Naive thymus-derived CD4-positive, alpha-beta T cell (primary cell): ENCODE measurements at regions of chr22 and their contacts with region 1.

Region 1: DNA sequence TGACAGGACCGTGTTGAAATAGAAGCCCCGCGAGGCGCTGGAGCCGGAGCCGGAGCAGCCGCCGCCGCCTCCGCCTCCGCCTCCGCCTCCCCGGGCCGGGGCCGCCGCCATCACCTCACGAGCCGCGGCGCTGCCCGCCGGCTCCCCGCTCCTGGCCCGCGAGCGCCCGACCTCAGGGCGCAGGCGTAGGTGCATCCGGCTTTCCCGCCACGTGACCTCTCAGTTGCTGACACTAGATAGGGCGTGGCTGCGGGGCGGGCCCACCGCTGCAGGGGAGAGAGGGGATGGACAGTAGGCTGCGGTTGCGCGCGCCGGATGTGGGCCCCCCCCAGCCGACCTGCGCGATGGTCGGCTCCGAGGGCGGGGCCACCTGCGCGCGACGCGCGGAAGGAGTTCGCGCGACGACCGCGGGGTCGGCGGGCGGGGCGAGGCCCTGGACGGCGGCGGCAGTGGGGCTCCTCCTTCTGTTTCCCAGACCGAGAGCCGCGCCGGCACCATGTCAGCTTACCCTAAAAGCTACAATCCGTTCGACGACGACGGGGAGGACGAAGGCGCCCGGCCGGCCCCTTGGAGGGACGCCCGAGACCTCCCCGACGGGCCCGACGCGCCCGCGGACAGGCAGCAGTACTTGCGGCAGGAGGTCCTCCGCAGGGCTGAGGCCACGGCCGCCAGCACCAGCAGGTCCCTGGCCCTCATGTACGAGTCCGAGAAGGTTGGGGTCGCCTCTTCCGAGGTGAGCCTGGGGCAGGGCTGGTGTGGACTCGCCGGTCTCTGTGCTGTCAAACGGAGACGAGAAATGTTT is at the starts of genes PI4KA and SNAP29:
- DNase-seq: peak; percentile 92 to 98 (median 96)
- ATAC-seq: peak; percentile 97
- H3K4me3 ChIP-seq: peak within 1 kb of the TSS; percentile 78
- H3K4me3 Mint-ChIP-seq: peak within 1 kb of the TSS; percentile 87 to 95 (median 92)
- H3K27ac ChIP-seq: peak within 1 kb of the TSS; percentile 87
- H3K27ac Mint-ChIP-seq: peak within 1 kb of the TSS; percentile 60 to 92 (median 88)
- H3K4me1 ChIP-seq: peaks cover 17 to 20% of the 10 kb centered on the region in 2 donors
- H3K4me1 Mint-ChIP-seq: peaks cover 38 to 76% (median 58%) of the 10 kb centered on the region in 7 donors
- H3K27me3 ChIP-seq: no peaks in the 10 kb centered on the region
- H3K27me3 Mint-ChIP-seq: no peaks in the 10 kb centered on the region
- total RNA-seq, gene PI4KA: 120 to 181 (median 168) TPM
- total RNA-seq, gene SNAP29: 15.2 to 32.8 (median 25.4) TPM

Region 2: GRCh38 chr22:19069451-19069850 is 1789.4 kb before region 1 on chr22:
- CTCF ChIA-PET with region 1: interaction called, 13 read pairs
- POLR2A ChIA-PET with region 1: no interaction called
- intact Hi-C with region 1: no loop called
- DNase-seq: no peak
- ATAC-seq: no peak
- H3K4me3 ChIP-seq: no peak overlapping the region
- H3K4me3 Mint-ChIP-seq: no peak overlapping the region
- H3K27ac ChIP-seq: no peak overlapping the region
- H3K27ac Mint-ChIP-seq: no peak overlapping the region
- H3K4me1 ChIP-seq: no peaks in the 10 kb centered on the region
- H3K4me1 Mint-ChIP-seq: peaks cover 2 to 33% (median 28%) of the 10 kb centered on the region in 7 donors
- H3K27me3 ChIP-seq: no peaks in the 10 kb centered on the region
- H3K27me3 Mint-ChIP-seq: no peaks in the 10 kb centered on the region

Region 3: GRCh38 chr22:20783844-20784723 is 74.7 kb before region 1 on chr22:
- CTCF ChIA-PET with region 1: no interaction called
- POLR2A ChIA-PET with region 1: no interaction called
- intact Hi-C with region 1: loop called in 1 of 2 experiments (anchors 2 kb)
- DNase-seq: peak in 8 of 9 donors; percentile 1 to 52 (median 32)
- ATAC-seq: peak; percentile 69
- H3K4me3 ChIP-seq: no peak overlapping the region
- H3K4me3 Mint-ChIP-seq: no peak overlapping the region
- H3K27ac ChIP-seq: no peak overlapping the region
- H3K27ac Mint-ChIP-seq: peak overlapping the region in 3 of 9 donors; percentile 20 to 37 (median 25)
- H3K4me1 ChIP-seq: no peaks in the 10 kb centered on the region
- H3K4me1 Mint-ChIP-seq: peaks cover 0 to 10% (median 0%) of the 10 kb centered on the region in 7 donors
- H3K27me3 ChIP-seq: no peaks in the 10 kb centered on the region
- H3K27me3 Mint-ChIP-seq: no peaks in the 10 kb centered on the region

Region 4: GRCh38 chr22:20803696-20804324 is 55.0 kb before region 1 on chr22:
- CTCF ChIA-PET with region 1: no interaction called
- POLR2A ChIA-PET with region 1: no interaction called
- intact Hi-C with region 1: loop called in 1 of 2 experiments (anchors 5 kb)
- DNase-seq: peak in 7 of 9 donors; percentile 16 to 33 (median 24)
- ATAC-seq: peak; percentile 42
- H3K4me3 ChIP-seq: no peak overlapping the region
- H3K4me3 Mint-ChIP-seq: no peak overlapping the region
- H3K27ac ChIP-seq: no peak overlapping the region
- H3K27ac Mint-ChIP-seq: peak overlapping the region in 1 of 9 donors; percentile 27
- H3K4me1 ChIP-seq: no peaks in the 10 kb centered on the region
- H3K4me1 Mint-ChIP-seq: no peaks in the 10 kb centered on the region
- H3K27me3 ChIP-seq: no peaks in the 10 kb centered on the region
- H3K27me3 Mint-ChIP-seq: no peaks in the 10 kb centered on the region

Region 5: GRCh38 chr22:20927940-20928572 is 69.2 kb after region 1 on chr22:
- CTCF ChIA-PET with region 1: no interaction called
- POLR2A ChIA-PET with region 1: no interaction called
- intact Hi-C with region 1: no loop called
- DNase-seq: no peak
- ATAC-seq: no peak
- H3K4me3 ChIP-seq: no peak overlapping the region
- H3K4me3 Mint-ChIP-seq: peak overlapping the region in 4 of 10 donors; percentile 6 to 55 (median 26)
- H3K27ac ChIP-seq: no peak overlapping the region
- H3K27ac Mint-ChIP-seq: peak overlapping the region in 3 of 9 donors; percentile 5 to 51 (median 40)
- H3K4me1 ChIP-seq: peaks cover 10% of the 10 kb centered on the region in 2 donors
- H3K4me1 Mint-ChIP-seq: peaks cover 25 to 78% (median 63%) of the 10 kb centered on the region in 7 donors
- H3K27me3 ChIP-seq: no peaks in the 10 kb centered on the region
- H3K27me3 Mint-ChIP-seq: no peaks in the 10 kb centered on the region